Posterior vena cava (tissue), 2 donors: ENCODE measurements at regions of chr6 and their contacts with region 1.

Region 1: DNA sequence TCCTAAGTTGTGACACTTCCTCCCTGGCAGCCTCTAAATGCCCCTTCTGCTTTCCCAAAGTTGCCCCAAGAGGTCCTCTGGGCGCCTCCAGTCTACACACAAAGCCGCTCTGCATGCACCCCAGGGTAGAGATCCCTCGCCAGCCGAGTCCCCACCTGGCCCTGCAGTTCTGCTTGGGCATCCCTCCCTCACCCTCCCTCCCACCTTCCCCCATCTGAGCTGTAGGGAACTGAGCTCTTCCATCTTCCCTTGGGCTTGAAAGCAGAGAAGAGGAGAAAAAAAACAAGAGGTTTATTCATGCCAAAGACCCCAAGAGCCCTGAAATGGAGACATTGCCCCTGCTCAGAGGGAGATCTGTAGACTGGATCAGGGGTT is 5.7 kb upstream of the FGD2 start:
- DNase-seq: no peak

Region 2: GRCh38 chr6:36414481-36414880 is 585.3 kb before region 1 on chr6:
- intact Hi-C with region 1: loop called in 1 of 2 experiments (anchors 2 kb)
- DNase-seq: no peak

Region 3: GRCh38 chr6:36692220-36692619 is 307.5 kb before region 1 on chr6:
- intact Hi-C with region 1: no loop called
- DNase-seq: no peak

Region 4: GRCh38 chr6:36947570-36948351 is 52.0 kb before region 1 on chr6:
- intact Hi-C with region 1: no loop called
- DNase-seq: peak; percentile 46